ENCODE measurements at regions of chr1 and their contacts with region 1.

Region 1: DNA sequence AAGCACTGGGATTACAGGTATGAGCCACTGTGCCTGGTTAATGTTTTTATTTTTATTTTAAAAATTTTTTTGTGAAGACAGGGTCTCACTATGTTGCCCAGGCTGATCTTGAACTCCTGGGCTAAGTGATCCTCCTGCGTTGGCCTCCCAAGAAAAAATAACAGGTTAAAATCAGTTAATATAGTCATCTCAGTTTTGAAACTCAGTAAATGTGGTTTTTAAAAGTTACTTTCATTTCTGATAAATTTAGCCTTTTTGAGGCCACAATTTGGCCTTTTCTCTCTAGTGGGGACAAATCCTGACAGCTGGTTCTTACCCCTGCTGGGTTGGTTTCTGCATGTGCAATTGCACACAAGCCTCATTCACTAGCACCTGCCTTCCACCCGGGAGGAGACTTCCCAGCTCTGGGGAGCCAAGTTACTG is 13.3 kb downstream of the PMF1 start:
- DNase-seq: no peak
- ATAC-seq: no peak
- H3K4me3 Mint-ChIP-seq: no peak overlapping the region
- H3K27ac Mint-ChIP-seq: no peak overlapping the region
- H3K4me1 Mint-ChIP-seq: peaks cover 4% of the 10 kb centered on the region
- H3K27me3 Mint-ChIP-seq: no peaks in the 10 kb centered on the region
- CTCF ChIP-seq: no peak

Region 2: GRCh38 chr1:156114101-156114916 is 111.8 kb before region 1 on chr1 and contains the start of gene LMNA:
- CTCF ChIA-PET with region 1: interaction called, 12 read pairs
- POLR2A ChIA-PET with region 1: no interaction called
- DNase-seq: peak; percentile 80
- ATAC-seq: peak; percentile 91
- H3K4me3 Mint-ChIP-seq: peak within 1 kb of the TSS; percentile 93
- H3K27ac Mint-ChIP-seq: no peak within 1 kb of the TSS
- H3K4me1 Mint-ChIP-seq: peaks cover 34% of the 10 kb centered on the region
- H3K27me3 Mint-ChIP-seq: peaks cover 18% of the 10 kb centered on the region
- CTCF ChIP-seq: no peak
- total RNA-seq, gene LMNA: 40.7 to 68.8 TPM (median 46.2 TPM) in 3 replicates

Region 3: DNA sequence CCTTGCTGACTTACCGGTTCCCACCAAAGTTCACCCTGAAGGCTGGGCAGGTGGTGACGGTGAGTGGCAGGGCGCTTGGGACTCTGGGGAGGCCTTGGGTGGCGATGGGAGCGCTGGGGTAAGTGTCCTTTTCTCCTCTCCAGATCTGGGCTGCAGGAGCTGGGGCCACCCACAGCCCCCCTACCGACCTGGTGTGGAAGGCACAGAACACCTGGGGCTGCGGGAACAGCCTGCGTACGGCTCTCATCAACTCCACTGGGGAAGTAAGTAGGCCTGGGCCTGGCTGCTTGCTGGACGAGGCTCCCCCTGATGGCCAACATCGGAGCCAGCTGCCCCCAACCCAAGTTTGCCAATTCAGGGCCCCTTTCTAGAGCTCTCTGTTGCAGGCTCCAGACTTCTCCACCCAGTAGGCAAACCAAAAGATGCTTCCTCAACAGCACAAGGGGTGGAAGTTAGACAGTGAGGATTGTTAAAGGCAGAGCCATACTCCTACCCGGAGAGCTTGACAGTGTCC is 89.1 kb before region 1 on chr1:
- CTCF ChIA-PET with region 1: interaction called, 358 read pairs
- POLR2A ChIA-PET with region 1: interaction called, 10 read pairs
- DNase-seq: peak; percentile 55
- ATAC-seq: peak; percentile 24; the same call in 1 of the 2 replicates
- H3K4me3 Mint-ChIP-seq: no peak overlapping the region
- H3K27ac Mint-ChIP-seq: no peak overlapping the region
- H3K4me1 Mint-ChIP-seq: peaks cover 9% of the 10 kb centered on the region
- H3K27me3 Mint-ChIP-seq: no peaks in the 10 kb centered on the region
- CTCF ChIP-seq: no peak

Region 4: DNA sequence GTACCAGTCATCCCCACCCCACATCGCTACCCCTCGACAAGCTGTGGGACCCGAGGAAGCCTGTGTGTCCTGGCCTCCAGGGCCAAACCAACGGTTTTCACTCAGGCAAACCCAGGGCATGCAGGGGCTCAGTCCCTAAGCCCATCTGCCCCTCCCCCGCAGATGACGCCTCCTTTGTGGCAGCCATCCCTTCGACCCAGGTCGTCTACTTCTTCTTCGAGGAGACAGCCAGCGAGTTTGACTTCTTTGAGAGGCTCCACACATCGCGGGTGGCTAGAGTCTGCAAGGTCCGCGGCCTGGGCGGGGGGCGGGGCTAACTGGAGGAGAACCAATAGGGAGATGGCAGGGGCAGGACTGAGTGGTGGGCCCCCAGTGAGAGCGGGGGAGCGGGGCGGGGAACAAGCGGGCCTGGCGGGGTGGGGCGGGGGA is 65.4 kb before region 1 on chr1:
- CTCF ChIA-PET with region 1: interaction called, 23 read pairs
- POLR2A ChIA-PET with region 1: no interaction called
- DNase-seq: peak; percentile 87
- ATAC-seq: peak; percentile 95
- H3K4me3 Mint-ChIP-seq: peak overlapping the region; percentile 71
- H3K27ac Mint-ChIP-seq: no peak overlapping the region
- H3K4me1 Mint-ChIP-seq: peaks cover 27% of the 10 kb centered on the region
- H3K27me3 Mint-ChIP-seq: no peaks in the 10 kb centered on the region
- CTCF ChIP-seq: no peak

Region 5: GRCh38 chr1:156193488-156194299 is 32.4 kb before region 1 on chr1 and contains the start of gene SLC25A44:
- CTCF ChIA-PET with region 1: interaction called, 29 read pairs
- POLR2A ChIA-PET with region 1: no interaction called
- DNase-seq: peak; percentile 97
- ATAC-seq: peak; percentile 98
- H3K4me3 Mint-ChIP-seq: peak within 1 kb of the TSS; percentile 99
- H3K27ac Mint-ChIP-seq: peak within 1 kb of the TSS; percentile 98
- H3K4me1 Mint-ChIP-seq: peaks cover 35% of the 10 kb centered on the region
- H3K27me3 Mint-ChIP-seq: no peaks in the 10 kb centered on the region
- CTCF ChIP-seq: peak; percentile 37
- total RNA-seq, gene SLC25A44: 17.9 to 29.1 TPM (median 19.7 TPM) in 3 replicates